Psoas muscle (tissue), 8 donors: ENCODE measurements at regions of chr10 and their contacts with region 1.

Region 1: DNA sequence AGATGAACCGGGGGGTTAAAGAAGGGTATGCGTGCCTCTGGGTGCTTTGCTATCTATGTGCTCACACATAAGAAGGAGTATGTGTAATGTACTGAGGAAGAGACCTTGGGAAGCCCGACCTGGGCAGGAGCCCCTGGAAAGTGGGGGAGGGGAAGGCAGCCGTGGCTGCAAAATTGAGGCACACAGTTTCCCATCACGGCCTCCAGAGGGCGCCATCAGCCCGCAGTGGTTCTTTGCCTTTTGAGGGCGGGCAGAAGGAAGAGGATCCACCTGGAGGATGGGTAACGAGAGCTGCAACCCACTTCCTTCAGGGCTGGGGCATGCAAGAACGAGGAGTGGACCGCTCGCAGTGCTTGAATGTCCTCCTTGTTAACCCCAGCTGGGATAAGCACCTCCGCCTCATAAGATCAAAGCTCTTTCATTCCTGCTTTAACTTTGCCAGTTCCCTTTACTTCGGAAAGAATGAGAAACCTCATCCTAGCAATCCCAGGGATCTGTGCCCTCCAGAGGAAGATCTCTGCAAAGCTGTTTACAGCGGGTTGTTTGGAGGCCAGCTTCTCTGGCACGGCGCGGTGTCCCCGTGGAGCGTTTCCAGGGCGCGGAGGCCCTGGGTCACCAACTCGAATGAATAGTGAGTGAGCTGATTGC is 77.9 kb downstream of the PCGF5 start:
- DNase-seq: peak; percentile 72 to 85
- ATAC-seq: peak; percentile 94 to 97 (median 96)
- H3K4me3 ChIP-seq: peak overlapping the region; percentile 66
- H3K27ac ChIP-seq: peak overlapping the region; percentile 66
- H3K4me1 ChIP-seq: peaks cover 8% of the 10 kb centered on the region
- H3K27me3 ChIP-seq: no peaks in the 10 kb centered on the region
- CTCF ChIP-seq: peak; percentile 96

Region 2: GRCh38 chr10:91227576-91227975 is 70.8 kb before region 1 on chr10:
- intact Hi-C with region 1: no loop called
- DNase-seq: no peak
- ATAC-seq: no peak
- H3K4me3 ChIP-seq: no peak overlapping the region
- H3K27ac ChIP-seq: no peak overlapping the region
- H3K4me1 ChIP-seq: peaks cover 29% of the 10 kb centered on the region
- H3K27me3 ChIP-seq: no peaks in the 10 kb centered on the region
- CTCF ChIP-seq: no peak

Region 3: DNA sequence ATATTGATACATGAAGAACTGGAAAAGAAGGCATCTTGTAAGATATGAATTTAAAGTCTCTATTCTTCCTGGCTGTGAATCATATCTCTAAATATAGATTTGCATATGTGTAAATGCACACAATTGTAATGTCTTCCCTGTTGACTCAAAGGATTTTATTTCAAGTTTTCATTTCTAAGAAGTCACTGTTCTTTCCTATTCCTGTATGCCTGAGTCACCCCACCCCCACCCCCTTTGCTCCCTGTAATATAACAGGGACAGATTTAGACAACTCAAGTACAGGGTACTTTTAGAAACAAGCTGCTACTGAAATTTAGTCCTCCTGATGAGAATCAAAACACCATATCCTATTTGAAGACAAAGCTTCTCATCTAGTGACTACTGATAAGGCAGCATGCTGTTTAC is 68.8 kb after region 1 on chr10:
- intact Hi-C with region 1: loop called in 1 of 2 experiments (anchors 1 kb)
- DNase-seq: no peak
- ATAC-seq: peak; percentile 85 to 94 (median 89)
- H3K4me3 ChIP-seq: no peak overlapping the region
- H3K27ac ChIP-seq: peak overlapping the region; percentile 82
- H3K4me1 ChIP-seq: peaks cover 18% of the 10 kb centered on the region
- H3K27me3 ChIP-seq: no peaks in the 10 kb centered on the region
- CTCF ChIP-seq: no peak

Region 4: DNA sequence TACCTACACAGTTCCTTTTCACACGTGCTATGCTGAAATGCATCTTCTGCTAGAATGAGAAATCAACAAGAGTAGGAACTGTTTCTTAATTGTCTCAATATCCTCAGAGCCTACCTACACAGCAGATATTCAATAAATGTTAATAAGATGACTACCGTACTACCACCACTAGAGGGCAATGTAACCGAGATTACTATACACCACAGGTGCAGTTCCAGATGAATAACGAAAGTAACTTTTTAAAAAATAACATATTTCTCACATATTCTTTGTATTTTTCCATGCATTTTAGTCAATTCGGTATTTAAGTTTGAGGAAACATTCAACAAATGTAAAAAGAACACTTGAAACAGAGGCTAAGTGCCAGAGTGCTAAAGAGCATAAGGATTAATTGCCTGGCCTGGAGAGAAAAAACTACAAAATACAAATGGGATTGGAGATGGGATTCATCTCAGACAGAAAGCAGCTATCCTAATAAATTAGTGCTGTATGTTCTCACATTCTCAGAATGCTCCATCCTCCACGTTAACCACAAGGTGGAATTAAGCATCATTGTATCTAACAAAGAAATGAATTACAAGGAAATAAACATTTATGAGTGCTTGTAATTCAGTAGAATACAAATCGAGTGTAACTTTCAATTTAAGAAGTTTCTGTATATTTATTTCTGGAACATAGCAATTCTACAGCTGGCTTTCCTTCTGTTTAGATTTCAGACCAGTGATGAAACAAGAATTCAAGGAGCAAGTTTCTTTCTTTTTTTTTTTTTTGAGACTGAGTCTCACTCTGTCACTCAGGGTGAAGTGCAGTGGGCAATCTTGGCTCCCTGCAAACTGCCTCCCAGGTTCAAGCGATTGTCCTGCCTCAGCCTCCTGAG is 91.5 kb after region 1 on chr10:
- intact Hi-C with region 1: loop called in 1 of 2 experiments (anchors 5 kb)
- DNase-seq: no peak
- ATAC-seq: peak; percentile 75 to 92 (median 82)
- H3K4me3 ChIP-seq: peak overlapping the region; percentile 50
- H3K27ac ChIP-seq: no peak overlapping the region
- H3K4me1 ChIP-seq: peaks cover 10% of the 10 kb centered on the region
- H3K27me3 ChIP-seq: no peaks in the 10 kb centered on the region
- CTCF ChIP-seq: peak; percentile 75

Region 5: DNA sequence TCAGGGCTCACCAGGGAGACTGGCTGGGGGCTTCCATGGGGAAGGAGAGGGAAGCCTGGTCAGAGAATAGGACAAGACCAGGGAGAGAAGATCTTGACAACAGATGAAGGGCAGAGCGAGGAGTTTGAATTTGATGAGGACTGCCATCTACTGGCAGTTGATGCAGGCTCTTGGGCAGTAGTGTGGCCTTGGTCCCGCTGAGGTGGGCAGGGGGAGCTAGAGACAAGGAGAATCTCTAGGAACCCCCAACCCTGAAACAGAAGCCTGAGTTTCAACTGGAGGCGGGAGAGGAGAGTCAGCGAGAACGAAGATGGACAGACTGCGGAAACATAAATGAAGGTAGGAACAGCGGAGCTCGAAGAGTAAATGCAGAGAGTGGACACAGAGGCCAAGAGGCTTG is 253.5 kb after region 1 on chr10:
- intact Hi-C with region 1: loop called in 1 of 2 experiments (anchors 10 kb)
- DNase-seq: no peak
- ATAC-seq: peak; percentile 66 to 79 (median 76)
- H3K4me3 ChIP-seq: peak overlapping the region; percentile 25
- H3K27ac ChIP-seq: peak overlapping the region; percentile 50
- H3K4me1 ChIP-seq: peaks cover 32% of the 10 kb centered on the region
- H3K27me3 ChIP-seq: no peaks in the 10 kb centered on the region
- CTCF ChIP-seq: peak; percentile 59